ENCODE measurements at regions of chr15 and their contacts with region 1.

Region 1: GRCh38 chr15:50003786-50004334 is 115.2 kb downstream of the ATP8B4 start:
- DNase-seq: peak; percentile 74
- H3K4me3 Mint-ChIP-seq: no peak overlapping the region
- H3K27ac Mint-ChIP-seq: no peak overlapping the region
- H3K4me1 Mint-ChIP-seq: peaks cover 1% of the 10 kb centered on the region
- H3K27me3 Mint-ChIP-seq: peaks cover 6% of the 10 kb centered on the region

Region 2: GRCh38 chr15:49235446-49236124 is 768.3 kb before region 1 on chr15:
- CTCF ChIA-PET with region 1: interaction called, 3 read pairs
- intact Hi-C with region 1: loop called (anchors 5 kb)
- DNase-seq: peak; percentile 67
- H3K4me3 Mint-ChIP-seq: no peak overlapping the region
- H3K27ac Mint-ChIP-seq: no peak overlapping the region
- H3K4me1 Mint-ChIP-seq: peaks cover 3% of the 10 kb centered on the region
- H3K27me3 Mint-ChIP-seq: no peaks in the 10 kb centered on the region

Region 3: DNA sequence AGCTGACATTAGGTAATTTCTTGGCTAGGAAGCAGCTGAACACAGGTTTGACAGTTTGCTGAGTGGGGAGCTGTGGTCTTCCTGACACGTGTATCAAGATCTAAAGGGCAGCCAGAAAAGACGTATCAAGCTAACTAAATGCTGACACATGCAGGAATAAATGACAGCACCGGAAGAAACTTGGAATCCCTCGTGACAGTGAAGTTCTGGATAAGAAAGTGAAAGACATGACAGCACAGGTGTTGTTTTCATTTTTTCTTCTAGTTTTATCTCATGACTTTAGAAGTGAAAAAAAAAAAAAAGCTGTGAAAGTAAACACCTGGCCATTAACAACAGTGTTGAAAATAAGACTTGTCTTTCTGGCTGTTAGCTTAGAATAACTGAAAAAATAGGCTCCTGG is 532.1 kb before region 1 on chr15:
- CTCF ChIA-PET with region 1: interaction called, 3 read pairs
- intact Hi-C with region 1: loop called (anchors 5 kb)
- DNase-seq: peak; percentile 13
- H3K4me3 Mint-ChIP-seq: no peak overlapping the region
- H3K27ac Mint-ChIP-seq: no peak overlapping the region
- H3K4me1 Mint-ChIP-seq: peaks cover 3% of the 10 kb centered on the region
- H3K27me3 Mint-ChIP-seq: no peaks in the 10 kb centered on the region

Region 4: DNA sequence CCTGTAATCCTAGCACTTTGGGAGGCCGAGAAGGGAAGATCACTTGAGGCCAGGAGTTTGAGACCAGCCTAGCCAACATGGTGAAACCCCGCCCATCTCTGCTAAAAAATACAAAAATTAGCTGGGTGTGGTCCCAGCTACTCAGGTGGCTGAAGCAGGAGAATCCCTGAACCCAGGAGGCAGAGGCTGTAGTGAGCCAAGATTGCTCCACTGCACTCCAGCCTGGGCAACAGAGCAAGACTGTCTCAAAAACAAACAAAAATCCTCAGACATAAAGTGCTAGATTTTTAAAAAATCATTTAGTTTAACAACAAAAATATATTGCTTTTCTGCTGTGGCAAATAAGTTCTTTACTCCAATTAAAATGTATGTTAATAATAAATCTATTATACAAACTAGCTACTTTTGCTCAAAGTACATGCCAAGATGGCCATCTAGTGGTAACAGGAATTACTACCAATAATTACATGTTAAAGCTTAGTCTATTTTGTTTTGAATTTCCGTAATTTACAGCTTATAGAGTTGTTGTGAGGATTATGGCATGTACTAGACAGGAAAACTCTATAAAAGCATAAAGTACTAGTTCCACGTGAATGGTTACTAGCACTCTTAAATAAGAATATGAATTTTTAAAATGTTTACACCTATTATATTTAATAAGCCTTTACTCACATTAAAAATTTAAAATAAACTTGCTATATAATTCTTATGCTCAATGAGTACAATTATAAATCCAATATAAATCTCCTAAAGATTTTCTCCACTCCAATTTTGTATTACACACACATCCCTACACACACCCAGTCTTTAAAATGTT is 312.2 kb after region 1 on chr15:
- CTCF ChIA-PET with region 1: interaction called, 4 read pairs
- intact Hi-C with region 1: loop called (anchors 10 kb)
- DNase-seq: no peak
- H3K4me3 Mint-ChIP-seq: no peak overlapping the region
- H3K27ac Mint-ChIP-seq: no peak overlapping the region
- H3K4me1 Mint-ChIP-seq: peaks cover 25% of the 10 kb centered on the region
- H3K27me3 Mint-ChIP-seq: no peaks in the 10 kb centered on the region

Measured in activated naive CD4-positive, alpha-beta T cell treated with anti-CD3 and anti-CD28 coated beads for 36 hours (primary cell).